A549 (cell line): ENCODE measurements at regions of chr17 and their contacts with region 1.

Region 1: GRCh38 chr17:46841561-46842379 is 9.6 kb upstream of the WNT9B start:
- DNase-seq: peak in 1 of 2 experiments; percentile 54
- ATAC-seq: peak; percentile 79 to 87
- H3K4me3 ChIP-seq: peak overlapping the region; percentile 24; the same call in 2 of the 3 replicates
- H3K27ac ChIP-seq: no peak overlapping the region
- H3K4me1 ChIP-seq: 0 out of 3 replicates have a peak, but pooled peaks cover 3% of the 10 kb centered on the region
- CTCF ChIP-seq: peak; percentile 94
- EP300 ChIP-seq: no peak
- POLR2A ChIP-seq: no peak
- RAD21 ChIP-seq: peak; percentile 57 to 78; a peak in 4 of 5 replicates

Region 2: DNA sequence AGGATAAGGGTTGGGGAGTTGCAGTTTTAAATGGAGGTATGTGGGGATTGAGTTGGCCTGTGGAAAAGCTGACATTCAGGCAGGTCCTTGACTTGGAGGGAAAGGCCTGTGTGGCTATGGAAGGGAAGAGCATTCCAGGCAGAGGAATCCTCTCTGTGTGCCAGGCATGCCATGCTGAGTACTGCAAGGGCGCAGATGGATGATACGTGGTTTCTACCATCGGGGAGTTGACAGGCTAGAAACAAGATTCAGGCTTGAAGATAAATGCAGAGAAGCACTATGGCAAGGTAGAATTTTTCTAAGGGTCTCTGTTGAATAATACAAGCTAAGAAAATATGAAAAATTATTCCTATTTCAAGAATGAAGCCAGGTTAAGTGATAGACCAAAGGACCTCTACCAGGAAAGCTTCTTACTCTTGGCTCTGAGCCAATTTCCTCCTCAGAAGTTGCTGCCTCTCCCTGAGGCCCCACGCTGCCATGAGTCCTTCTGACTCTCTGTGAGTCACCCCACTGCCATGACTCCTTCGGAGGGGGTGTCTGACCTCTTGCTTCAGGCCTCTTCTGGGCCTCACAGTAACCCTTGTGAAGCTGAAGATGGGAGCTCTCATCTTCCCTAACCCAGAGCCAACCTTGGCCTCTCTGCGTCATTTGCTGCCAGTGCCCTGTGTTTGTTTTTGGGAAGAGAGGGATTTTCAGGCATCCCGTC is 99.1 kb before region 1 on chr17:
- CTCF ChIA-PET with region 1: no interaction called
- POLR2A ChIA-PET with region 1: no interaction called
- DNase-seq: peak; percentile 76 to 84
- ATAC-seq: peak; percentile 96 to 98
- H3K4me3 ChIP-seq: no peak overlapping the region
- H3K27ac ChIP-seq: peak overlapping the region; percentile 36 to 75; a peak in 5 of 6 replicates
- H3K4me1 ChIP-seq: peaks cover 22% of the 10 kb centered on the region
- CTCF ChIP-seq: no peak
- EP300 ChIP-seq: no peak
- POLR2A ChIP-seq: no peak
- RAD21 ChIP-seq: no peak

Region 3: GRCh38 chr17:46754226-46754625 is 87.5 kb before region 1 on chr17:
- CTCF ChIA-PET with region 1: no interaction called
- POLR2A ChIA-PET with region 1: no interaction called
- DNase-seq: no peak
- ATAC-seq: no peak
- H3K4me3 ChIP-seq: no peak overlapping the region
- H3K27ac ChIP-seq: no peak overlapping the region
- H3K4me1 ChIP-seq: peaks cover 21% of the 10 kb centered on the region
- CTCF ChIP-seq: no peak
- EP300 ChIP-seq: no peak
- POLR2A ChIP-seq: no peak
- RAD21 ChIP-seq: no peak

Region 4: DNA sequence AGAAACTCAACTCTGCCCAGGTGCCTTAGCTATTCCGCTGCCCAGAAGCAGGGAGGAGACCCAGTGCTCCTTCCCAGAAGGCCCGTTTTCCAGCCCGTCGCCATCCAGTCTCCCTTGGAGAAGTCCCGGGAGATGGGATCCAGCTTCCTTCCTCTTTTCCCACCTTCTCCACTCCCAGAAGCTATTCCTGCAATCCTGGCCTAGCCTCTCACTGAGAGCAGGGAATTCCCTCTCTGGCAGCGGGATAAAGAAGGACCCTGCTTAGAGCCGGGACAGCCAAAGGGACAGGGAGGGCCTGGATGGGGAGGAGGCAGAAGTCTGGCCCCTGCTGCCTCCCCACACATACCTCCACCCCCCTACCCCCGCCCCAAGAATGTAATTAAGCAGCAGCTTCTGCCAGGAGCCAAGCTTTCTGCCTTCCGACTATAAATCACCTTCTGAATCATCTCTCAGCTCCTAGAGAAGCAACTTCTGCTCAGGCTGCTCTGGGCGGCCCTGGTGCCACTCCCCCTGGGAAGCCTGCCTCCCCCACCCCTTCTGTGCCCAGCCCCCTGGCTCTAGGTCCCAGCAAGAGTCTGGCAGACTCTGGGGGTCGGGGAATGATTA is 29.7 kb before region 1 on chr17:
- CTCF ChIA-PET with region 1: interaction called, 10 read pairs
- POLR2A ChIA-PET with region 1: no interaction called
- DNase-seq: no peak
- ATAC-seq: peak in 1 of 2 experiments; percentile 44; a peak in 3 of 6 replicates
- H3K4me3 ChIP-seq: no peak overlapping the region
- H3K27ac ChIP-seq: peak overlapping the region in 1 of 2 experiments; percentile 6; a peak in 1 of 6 replicates
- H3K4me1 ChIP-seq: 0 out of 3 replicates have a peak, but pooled peaks cover 7% of the 10 kb centered on the region
- CTCF ChIP-seq: no peak
- EP300 ChIP-seq: no peak
- POLR2A ChIP-seq: no peak
- RAD21 ChIP-seq: no peak

Region 5: GRCh38 chr17:46859996-46860395 is 18.2 kb after region 1 on chr17:
- CTCF ChIA-PET with region 1: interaction called, 32 read pairs
- POLR2A ChIA-PET with region 1: no interaction called
- DNase-seq: no peak
- ATAC-seq: no peak
- H3K4me3 ChIP-seq: no peak overlapping the region
- H3K27ac ChIP-seq: no peak overlapping the region
- H3K4me1 ChIP-seq: no peaks in the 10 kb centered on the region
- CTCF ChIP-seq: no peak
- EP300 ChIP-seq: no peak
- POLR2A ChIP-seq: no peak
- RAD21 ChIP-seq: no peak

Region 6: DNA sequence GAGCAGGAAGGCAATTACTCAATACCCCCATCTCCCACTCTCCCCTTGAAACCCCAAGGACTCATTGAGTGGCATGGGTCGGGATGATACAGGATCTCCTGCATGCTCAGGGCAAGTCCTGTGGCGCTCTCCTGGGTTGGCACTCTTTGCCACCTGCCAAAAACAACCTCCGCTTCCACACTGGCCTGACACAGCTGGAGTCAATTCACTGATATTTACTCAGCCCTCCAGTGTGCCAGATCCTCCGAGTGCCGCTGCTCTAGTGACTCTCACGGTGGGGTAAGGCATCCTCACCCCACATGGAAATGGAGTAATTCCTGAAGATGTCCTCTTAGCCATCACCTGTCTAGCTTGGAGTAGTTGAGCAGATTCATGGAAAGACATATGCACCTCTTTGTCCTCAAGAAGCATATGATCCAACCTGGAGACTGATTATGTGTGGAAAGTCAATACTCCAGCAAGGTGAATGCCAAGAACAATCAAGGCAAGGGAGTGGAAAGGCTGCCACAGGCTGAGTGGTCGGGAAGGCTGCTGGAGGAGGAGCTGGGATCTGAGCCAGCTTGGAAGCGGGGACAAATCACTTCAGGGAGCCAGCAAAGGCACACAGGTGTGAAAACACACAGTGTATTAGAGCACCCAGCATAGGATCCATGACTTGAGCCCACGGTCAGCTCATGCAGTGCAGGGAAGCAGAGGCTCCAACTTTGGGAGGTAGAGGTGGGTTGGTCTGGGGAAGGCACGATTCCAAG is 68.6 kb after region 1 on chr17:
- CTCF ChIA-PET with region 1: interaction called, 11 read pairs
- POLR2A ChIA-PET with region 1: no interaction called
- DNase-seq: no peak
- ATAC-seq: no peak
- H3K4me3 ChIP-seq: no peak overlapping the region
- H3K27ac ChIP-seq: no peak overlapping the region
- H3K4me1 ChIP-seq: no peaks in the 10 kb centered on the region
- CTCF ChIP-seq: no peak
- EP300 ChIP-seq: no peak
- POLR2A ChIP-seq: no peak
- RAD21 ChIP-seq: no peak

Region 7: DNA sequence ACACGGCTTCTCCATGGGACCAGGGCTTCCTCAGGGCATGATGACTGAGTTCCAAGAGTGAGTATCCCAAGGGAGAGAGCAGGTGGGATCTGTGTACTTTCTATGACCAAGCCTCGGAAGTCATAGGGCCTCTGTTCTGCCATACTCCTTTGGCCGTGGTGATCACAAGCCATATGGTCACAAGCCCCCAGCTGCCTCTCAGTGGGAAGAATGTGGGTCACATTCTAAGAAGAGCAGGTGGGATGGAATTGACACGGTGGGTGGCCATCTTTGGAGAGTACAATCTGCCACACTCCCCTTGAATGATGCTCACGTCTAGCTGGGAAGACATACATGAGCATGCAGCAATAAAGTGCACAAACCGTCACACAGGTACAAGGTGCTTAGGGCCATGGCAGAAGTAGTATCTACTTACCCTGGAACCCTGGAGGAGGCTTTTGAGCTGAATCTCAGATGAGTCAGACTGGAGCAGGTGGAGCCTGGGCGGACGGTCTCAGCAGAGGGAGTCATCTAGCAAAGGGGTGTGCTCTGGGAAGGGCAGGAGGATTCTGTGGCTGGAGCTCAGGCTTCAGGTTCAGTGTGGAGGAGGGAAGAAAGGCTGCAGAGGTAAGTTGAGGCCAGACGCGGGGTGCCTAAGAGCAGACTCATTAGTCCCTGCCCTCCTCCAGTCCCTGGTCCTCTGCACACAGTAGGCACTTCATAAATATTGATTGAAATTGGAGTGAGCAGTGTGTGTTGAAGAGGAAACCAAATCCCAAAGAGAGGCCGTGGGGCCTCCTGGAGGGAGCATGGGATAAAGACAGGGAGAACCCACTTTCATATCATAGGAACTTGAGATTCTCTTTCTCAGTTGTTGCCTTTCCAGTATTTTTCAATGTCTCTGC is 107.8 kb after region 1 on chr17:
- CTCF ChIA-PET with region 1: interaction called, 54 read pairs
- POLR2A ChIA-PET with region 1: no interaction called
- DNase-seq: no peak
- ATAC-seq: peak; percentile 20 to 47; a peak in 4 of 6 replicates
- H3K4me3 ChIP-seq: no peak overlapping the region
- H3K27ac ChIP-seq: no peak overlapping the region
- H3K4me1 ChIP-seq: no peaks in the 10 kb centered on the region
- CTCF ChIP-seq: no peak
- EP300 ChIP-seq: no peak
- POLR2A ChIP-seq: no peak
- RAD21 ChIP-seq: no peak